GM23248 (cell line): ENCODE measurements at regions of chr11 and their contacts with region 1.

Region 1: GRCh38 chr11:65378221-65378907 is 4.1 kb downstream of the SLC25A45 start:
- DNase-seq: no peak
- H3K4me3 ChIP-seq: no peak overlapping the region
- H3K27ac ChIP-seq: no peak overlapping the region
- H3K4me1 ChIP-seq: peaks cover 16% of the 10 kb centered on the region
- H3K27me3 ChIP-seq: no peaks in the 10 kb centered on the region

Region 2: DNA sequence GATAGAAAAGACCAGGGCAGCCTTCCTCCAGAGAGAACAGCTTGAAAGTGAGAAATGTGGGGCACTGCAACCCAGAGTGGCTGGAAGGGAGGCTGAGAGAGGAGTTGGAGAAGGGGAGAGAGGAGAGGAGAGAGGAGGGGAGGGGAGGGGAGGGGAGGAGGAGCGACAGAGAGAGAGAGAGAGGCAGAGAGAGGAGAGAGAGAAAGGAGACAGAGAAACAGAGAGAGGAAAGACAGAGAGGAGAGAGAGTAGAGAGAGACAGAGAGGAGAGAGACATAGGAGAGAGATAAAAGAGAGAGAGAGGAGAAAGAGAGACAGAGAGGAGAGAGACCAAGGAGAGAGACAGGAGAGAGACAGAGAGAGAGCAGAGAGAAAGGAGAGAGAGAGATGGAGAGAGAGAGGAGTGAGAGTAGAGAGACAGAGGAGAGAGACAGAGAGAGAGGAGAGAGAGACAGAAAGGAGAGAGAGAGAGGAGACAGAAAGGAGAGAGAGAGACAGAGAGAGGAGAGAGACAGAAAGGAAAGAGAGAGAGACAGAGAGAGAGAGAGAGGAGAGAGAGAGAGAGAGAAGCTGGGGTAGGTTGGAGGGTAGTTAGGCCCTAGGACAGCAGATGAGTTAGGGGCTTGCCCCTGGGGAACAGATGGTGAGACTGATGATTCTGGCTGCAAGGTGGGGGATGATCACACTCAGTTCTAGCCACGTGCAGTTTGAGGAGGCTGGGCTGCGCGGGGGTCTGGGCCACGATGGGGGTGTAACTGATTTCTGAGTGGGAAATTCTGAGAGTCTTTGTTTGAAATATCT is 138.0 kb after region 1 on chr11:
- in situ Hi-C with region 1: loop called (anchors 10 kb)
- DNase-seq: no peak
- H3K4me3 ChIP-seq: no peak overlapping the region
- H3K27ac ChIP-seq: no peak overlapping the region
- H3K4me1 ChIP-seq: no peaks in the 10 kb centered on the region
- H3K27me3 ChIP-seq: no peaks in the 10 kb centered on the region